ENCODE measurements at regions of chr11 and their contacts with region 1.

Region 1: GRCh38 chr11:102279641-102280170 is 37.6 kb upstream of the BIRC3 start:
- DNase-seq: peak; percentile 28
- H3K4me3 Mint-ChIP-seq: peak overlapping the region; percentile 61
- H3K27ac Mint-ChIP-seq: peak overlapping the region; percentile 85
- H3K4me1 Mint-ChIP-seq: peaks cover 47% of the 10 kb centered on the region
- H3K27me3 Mint-ChIP-seq: no peaks in the 10 kb centered on the region
- CTCF ChIP-seq: no peak

Region 2: DNA sequence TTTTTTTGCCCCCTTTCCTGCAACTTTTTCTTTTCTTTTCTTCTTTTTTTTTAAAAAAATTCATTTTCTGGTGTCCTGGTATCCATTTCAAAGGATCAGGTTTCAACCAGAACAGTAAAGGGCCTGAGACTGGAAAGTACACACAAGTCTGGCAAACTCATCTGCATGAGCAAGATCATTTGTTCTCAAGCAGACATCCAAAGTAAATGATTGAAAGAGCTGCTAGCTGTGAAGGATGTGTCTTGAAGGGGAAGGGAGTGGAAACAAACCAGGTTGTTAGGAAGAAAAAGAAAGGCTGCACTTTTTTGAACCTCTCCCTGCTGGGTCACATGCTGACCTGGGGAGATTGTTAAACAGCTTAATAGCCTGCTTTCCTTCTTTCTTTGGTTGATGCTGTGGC is 164.1 kb before region 1 on chr11:
- CTCF ChIA-PET with region 1: no interaction called
- intact Hi-C with region 1: loop called (anchors 2 kb)
- DNase-seq: peak; percentile 30
- H3K4me3 Mint-ChIP-seq: peak overlapping the region; percentile 50
- H3K27ac Mint-ChIP-seq: peak overlapping the region; percentile 60
- H3K4me1 Mint-ChIP-seq: peaks cover 40% of the 10 kb centered on the region
- H3K27me3 Mint-ChIP-seq: no peaks in the 10 kb centered on the region
- CTCF ChIP-seq: no peak

Region 3: DNA sequence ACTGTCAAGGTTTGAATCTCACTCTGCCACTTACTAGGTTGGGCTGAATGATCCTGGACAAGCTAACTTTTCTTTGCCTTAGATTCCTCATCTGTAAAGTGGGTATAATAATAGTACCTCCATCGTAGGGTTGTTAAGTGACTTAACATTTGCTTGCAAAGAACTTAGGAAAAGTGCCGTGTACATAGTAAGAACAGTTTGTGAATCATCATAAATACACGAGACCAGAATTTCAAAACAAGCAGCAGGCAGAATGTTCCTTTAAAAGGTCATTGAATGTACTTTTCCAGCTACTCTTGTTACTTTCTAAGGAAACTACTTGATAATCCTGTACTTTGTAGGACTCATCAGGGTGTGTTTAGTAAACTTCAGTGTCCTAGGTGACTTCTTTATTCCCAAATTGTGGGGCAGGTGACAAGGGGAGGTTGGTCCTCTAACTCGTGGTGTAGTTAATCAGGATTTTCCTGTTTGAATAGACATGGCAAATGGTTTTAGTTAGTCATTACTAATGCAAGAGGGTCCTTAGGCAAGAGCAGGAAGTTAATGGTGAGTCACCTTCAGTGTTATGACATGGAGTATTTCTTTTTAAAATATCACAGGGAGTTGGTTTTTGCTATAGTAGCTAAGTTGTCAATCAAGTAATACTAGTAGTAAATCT is 101.6 kb before region 1 on chr11:
- CTCF ChIA-PET with region 1: no interaction called
- intact Hi-C with region 1: loop called (anchors 5 kb)
- DNase-seq: peak; percentile 53
- H3K4me3 Mint-ChIP-seq: peak overlapping the region; percentile 43
- H3K27ac Mint-ChIP-seq: peak overlapping the region; percentile 94
- H3K4me1 Mint-ChIP-seq: peaks cover 35% of the 10 kb centered on the region
- H3K27me3 Mint-ChIP-seq: no peaks in the 10 kb centered on the region
- CTCF ChIP-seq: no peak

Region 4: DNA sequence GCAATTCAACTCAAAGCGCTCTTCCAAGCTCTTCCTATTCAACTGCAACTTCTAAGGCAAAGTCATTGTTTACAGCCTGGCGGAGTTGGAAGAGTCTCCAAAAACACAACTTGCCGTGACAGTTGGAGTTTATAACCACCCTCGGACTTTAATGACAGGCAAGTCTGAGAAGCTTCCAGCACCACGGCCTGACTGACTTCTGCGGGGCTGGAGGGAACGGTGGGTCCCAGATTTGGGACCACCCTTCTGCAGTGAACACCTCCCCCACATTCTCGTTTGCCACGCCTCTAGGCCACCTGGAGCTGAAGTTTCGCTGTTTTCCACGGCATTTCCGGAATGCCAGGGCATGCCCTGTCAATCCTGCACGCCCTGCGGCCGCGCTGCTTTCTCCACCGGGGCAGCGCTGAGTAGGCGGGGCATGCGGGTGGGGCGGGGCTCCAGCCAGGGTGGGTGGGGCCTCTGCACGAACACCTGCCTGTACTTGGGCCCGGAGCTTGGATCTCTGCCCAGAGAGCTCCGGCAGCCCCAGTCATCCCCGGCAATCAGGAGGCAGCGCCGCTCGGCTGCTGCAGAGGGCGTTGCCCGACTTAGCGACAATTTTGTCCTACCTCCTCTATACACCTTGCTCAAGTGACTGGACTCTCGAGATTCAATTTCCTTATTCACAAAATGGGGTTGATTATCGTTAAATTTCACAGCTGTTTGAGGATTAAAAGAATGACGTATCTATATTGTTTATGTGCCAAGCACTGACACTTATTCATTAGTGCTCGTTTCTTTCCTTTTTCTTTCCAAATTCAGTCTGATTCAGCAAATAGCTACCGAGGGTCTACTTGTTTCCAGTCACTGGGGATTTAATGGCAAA is 11.1 kb before region 1 on chr11:
- CTCF ChIA-PET with region 1: interaction called, 14 read pairs
- intact Hi-C with region 1: no loop called
- DNase-seq: peak; percentile 90
- H3K4me3 Mint-ChIP-seq: peak overlapping the region; percentile 73
- H3K27ac Mint-ChIP-seq: peak overlapping the region; percentile 87
- H3K4me1 Mint-ChIP-seq: peaks cover 35% of the 10 kb centered on the region
- H3K27me3 Mint-ChIP-seq: no peaks in the 10 kb centered on the region
- CTCF ChIP-seq: no peak